ENCODE measurements at regions of chr2 and their contacts with region 1.

Region 1: GRCh38 chr2:219057709-219058540 is 2.8 kb downstream of the IHH start:
- DNase-seq: peak; percentile 87
- H3K4me3 Mint-ChIP-seq: peak overlapping the region; percentile 46
- H3K27ac Mint-ChIP-seq: no peak overlapping the region
- H3K4me1 Mint-ChIP-seq: peaks cover 26% of the 10 kb centered on the region
- H3K27me3 Mint-ChIP-seq: peaks cover 62% of the 10 kb centered on the region

Region 2: DNA sequence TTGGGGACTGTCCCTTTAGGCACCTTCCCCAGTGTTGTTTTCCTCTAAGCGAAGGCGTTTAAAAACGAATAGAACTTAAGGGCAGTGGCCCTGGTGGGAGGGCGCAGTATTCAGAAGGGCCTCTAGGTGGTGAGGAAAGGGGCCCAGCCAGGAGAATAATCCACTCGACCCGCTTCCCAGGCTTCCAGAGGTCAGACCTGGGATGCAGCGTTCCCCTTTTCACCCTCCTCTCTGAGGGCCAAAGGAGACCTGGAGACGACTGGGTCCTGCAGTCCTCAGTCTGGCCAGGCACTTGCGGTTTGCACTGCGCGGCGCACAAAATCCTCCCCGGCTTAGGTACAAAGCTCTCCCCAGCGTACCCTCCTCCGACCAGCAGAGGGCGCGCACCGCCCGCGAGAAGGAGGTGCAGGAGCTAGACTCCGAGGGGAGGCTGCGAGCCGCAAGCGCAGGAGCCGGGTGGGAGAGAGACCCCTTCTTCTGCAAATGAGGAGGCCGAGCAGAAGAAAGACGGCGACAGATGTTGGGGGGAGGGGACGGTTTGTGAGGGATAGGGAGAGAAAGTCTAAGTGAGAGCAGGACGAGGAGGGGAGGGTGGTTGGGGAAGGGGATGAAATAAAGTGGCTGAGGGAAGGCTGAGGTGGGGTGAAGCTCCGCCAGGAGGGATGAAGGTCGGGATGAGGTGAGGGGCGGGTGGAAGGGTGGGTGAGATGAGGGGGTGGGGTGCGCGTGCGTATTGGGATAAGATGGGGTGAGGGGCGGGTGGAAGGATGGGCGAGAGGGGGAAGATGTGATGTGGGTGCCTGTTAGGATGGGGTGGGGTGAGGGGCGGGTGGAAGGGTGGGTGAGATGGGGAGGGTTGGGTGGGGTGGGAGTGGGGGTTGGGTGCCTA is 77.8 kb before region 1 on chr2:
- CTCF ChIA-PET with region 1: interaction called, 14 read pairs
- POLR2A ChIA-PET with region 1: no interaction called
- intact Hi-C with region 1: loop called (anchors 5 kb)
- DNase-seq: peak; percentile 89
- H3K4me3 Mint-ChIP-seq: peak overlapping the region; percentile 52
- H3K27ac Mint-ChIP-seq: no peak overlapping the region
- H3K4me1 Mint-ChIP-seq: peaks cover 28% of the 10 kb centered on the region
- H3K27me3 Mint-ChIP-seq: peaks cover 62% of the 10 kb centered on the region

Region 3: DNA sequence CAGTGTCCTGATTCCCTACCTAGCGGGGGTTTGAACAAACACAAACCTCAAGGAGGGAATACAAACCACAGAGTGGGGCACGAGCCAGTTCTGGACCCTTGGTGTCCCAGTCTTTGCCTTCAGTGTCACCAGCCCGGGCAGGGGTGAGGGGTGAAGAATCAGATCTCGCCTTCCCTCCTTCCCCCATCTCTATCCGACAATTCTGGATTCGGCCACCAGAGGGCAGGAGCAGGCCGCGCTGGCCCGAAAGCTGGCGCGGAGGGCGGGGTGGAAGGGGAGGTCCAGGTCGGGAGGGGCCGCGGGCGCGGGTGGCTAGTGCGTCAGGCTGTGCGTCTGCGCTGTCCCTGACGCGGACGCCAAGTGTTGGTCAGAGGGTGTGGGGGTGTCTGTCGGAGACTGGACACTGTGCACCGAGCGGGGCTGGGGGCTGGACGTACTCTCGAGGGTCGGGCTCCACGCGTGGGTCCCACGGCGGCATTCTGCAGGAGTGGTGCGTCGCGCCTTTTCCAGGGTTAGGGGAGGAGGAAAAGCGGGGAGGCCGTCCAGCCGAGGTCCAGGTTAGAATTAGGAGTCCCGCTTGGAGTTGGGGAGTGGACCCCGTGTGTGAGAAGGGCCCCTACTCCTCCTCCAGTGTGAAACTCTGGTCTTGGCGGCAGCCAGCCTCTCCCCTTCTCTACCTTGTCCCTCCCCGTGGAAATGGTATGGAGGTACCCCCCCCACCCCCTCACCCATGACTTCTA is 61.8 kb before region 1 on chr2:
- CTCF ChIA-PET with region 1: interaction called, 17 read pairs
- POLR2A ChIA-PET with region 1: no interaction called
- intact Hi-C with region 1: no loop called
- DNase-seq: peak; percentile 86
- H3K4me3 Mint-ChIP-seq: no peak overlapping the region
- H3K27ac Mint-ChIP-seq: no peak overlapping the region
- H3K4me1 Mint-ChIP-seq: peaks cover 2% of the 10 kb centered on the region
- H3K27me3 Mint-ChIP-seq: peaks cover 73% of the 10 kb centered on the region

Region 4: GRCh38 chr2:219020604-219021365 is 37.1 kb before region 1 on chr2:
- CTCF ChIA-PET with region 1: no interaction called
- POLR2A ChIA-PET with region 1: no interaction called
- intact Hi-C with region 1: no loop called
- DNase-seq: no peak
- H3K4me3 Mint-ChIP-seq: no peak overlapping the region
- H3K27ac Mint-ChIP-seq: no peak overlapping the region
- H3K4me1 Mint-ChIP-seq: no peaks in the 10 kb centered on the region
- H3K27me3 Mint-ChIP-seq: no peaks in the 10 kb centered on the region

Region 5: DNA sequence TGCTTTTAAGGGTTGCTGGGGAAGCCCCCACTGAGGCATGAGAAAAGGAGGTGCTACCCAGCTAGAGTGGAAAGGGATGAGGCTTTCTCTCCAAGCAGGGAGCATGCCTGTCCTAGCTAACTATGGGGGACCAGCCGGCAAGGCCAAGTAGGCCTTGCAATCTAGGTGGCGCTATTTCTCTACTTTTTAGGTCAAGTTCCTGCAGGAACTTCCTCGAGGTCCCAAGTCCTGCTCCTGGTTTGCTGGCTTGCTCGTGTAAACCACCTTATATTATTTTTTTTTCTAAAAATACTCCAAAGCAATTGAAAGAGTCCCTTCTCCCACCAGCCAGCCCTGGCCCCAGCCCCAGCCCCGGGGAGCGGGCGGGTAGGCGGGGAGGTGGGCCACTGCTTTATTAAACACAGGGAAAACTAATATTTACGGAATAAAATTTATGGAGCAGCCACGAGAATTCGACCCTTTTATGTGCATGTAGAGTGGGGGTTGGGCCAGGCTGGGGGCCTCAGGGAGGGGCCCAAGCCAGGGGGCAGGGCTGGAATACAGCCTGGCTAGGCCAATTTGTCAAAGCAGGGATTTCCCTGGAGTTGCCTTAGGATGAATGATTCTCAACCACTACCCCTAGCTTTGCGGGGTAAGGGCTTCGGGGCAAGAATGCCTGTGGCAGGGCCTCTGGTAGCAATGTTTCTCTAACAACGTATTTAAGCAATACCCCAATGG is 15.6 kb after region 1 on chr2:
- CTCF ChIA-PET with region 1: interaction called, 34 read pairs
- POLR2A ChIA-PET with region 1: no interaction called
- intact Hi-C with region 1: no loop called
- DNase-seq: peak; percentile 25
- H3K4me3 Mint-ChIP-seq: no peak overlapping the region
- H3K27ac Mint-ChIP-seq: no peak overlapping the region
- H3K4me1 Mint-ChIP-seq: no peaks in the 10 kb centered on the region
- H3K27me3 Mint-ChIP-seq: no peaks in the 10 kb centered on the region

Region 6: DNA sequence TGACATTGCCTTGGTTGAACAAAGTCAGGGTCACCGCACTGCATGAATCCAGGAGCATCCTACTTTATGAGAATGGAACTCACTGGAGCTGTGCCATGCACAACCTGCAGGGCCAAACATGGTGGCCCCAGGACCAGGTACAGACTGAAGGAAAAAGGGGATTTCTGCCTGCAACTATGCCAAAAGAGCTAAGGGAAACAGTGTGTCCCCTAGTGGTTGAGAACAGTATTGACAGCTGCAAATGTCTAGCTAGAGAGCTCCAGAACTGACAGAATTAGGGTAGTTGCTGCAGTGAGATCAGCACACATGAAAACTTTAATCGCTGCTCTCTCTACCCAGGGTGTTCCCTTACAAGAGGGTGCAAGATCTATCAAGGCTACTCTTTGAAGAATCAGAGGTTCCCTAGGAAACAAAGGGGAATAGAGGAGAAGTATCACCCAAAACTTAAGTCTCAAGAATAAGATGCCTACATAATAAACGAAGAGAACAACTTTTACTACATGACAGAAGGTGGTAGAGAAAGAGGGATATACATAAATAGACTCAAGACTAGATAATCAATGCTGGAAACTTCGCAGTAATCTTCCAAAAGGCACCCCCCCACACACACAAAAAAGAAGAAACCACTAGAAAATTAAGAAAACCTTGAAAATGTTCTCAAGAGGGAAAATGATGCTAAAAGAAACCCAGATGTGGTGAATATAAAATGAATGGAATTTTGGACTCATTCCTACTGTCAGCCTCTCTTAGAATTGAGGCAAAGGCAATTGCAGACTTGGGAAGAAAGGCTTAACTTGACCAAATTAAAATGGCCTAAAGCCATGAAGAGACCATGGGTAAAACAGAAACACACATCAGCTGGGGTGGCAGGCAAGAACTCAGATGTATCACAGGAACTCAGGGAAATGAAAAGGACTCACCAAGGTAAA is 46.4 kb after region 1 on chr2:
- CTCF ChIA-PET with region 1: interaction called, 45 read pairs
- POLR2A ChIA-PET with region 1: no interaction called
- intact Hi-C with region 1: loop called (anchors 1 kb)
- DNase-seq: peak; percentile 18
- H3K4me3 Mint-ChIP-seq: no peak overlapping the region
- H3K27ac Mint-ChIP-seq: peak overlapping the region; percentile 53
- H3K4me1 Mint-ChIP-seq: peaks cover 29% of the 10 kb centered on the region
- H3K27me3 Mint-ChIP-seq: no peaks in the 10 kb centered on the region

Region 7: GRCh38 chr2:219149667-219150066 is 91.7 kb after region 1 on chr2:
- CTCF ChIA-PET with region 1: interaction called, 82 read pairs
- POLR2A ChIA-PET with region 1: no interaction called
- intact Hi-C with region 1: no loop called
- DNase-seq: no peak
- H3K4me3 Mint-ChIP-seq: no peak overlapping the region
- H3K27ac Mint-ChIP-seq: no peak overlapping the region
- H3K4me1 Mint-ChIP-seq: no peaks in the 10 kb centered on the region
- H3K27me3 Mint-ChIP-seq: no peaks in the 10 kb centered on the region

Region 8: DNA sequence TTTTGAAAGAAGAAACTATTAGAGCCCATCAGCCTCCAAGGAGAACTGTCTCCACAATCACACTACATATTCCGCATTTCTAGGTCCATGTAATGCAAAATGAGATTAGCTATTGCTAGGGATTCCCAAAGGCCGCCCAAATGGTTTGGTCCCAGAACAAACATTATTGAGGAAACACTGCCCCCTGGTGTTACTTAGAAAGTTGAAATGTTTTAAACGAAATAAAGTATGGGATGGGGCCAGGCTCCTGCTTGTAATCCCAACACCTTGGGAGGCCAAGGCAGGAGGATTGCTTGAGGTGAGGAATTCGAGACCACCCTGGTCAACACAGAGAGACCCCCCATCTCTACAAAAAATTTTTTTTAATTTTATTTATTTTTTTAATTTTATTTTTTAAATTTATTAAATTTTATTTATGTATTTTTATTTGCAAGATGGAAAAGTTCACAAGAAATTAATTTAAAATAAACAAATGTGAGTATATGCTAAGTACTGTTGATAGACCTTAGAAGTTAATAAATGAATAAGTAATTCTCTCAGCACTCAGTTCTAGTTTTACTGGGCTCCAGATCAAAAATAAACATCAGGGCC is 97.2 kb after region 1 on chr2:
- CTCF ChIA-PET with region 1: interaction called, 82 read pairs
- POLR2A ChIA-PET with region 1: interaction called, 4 read pairs
- intact Hi-C with region 1: loop called (anchors 1 kb)
- DNase-seq: peak; percentile 31
- H3K4me3 Mint-ChIP-seq: no peak overlapping the region
- H3K27ac Mint-ChIP-seq: no peak overlapping the region
- H3K4me1 Mint-ChIP-seq: peaks cover 8% of the 10 kb centered on the region
- H3K27me3 Mint-ChIP-seq: no peaks in the 10 kb centered on the region

Measured in activated CD4-positive, alpha-beta memory T cell treated with anti-CD3 and anti-CD28 coated beads for 36 hours (primary cell).